ENCODE measurements at regions of chr10 and their contacts with region 1.

Region 1: GRCh38 chr10:110617425-110618229 is 26.5 kb upstream of the RBM20 start:
- DNase-seq: peak; percentile 57
- ATAC-seq: peak; percentile 45
- H3K4me3 Mint-ChIP-seq: no peak overlapping the region
- H3K27ac Mint-ChIP-seq: peak overlapping the region; percentile 74
- H3K4me1 Mint-ChIP-seq: peaks cover 60% of the 10 kb centered on the region
- H3K27me3 Mint-ChIP-seq: no peaks in the 10 kb centered on the region

Region 2: DNA sequence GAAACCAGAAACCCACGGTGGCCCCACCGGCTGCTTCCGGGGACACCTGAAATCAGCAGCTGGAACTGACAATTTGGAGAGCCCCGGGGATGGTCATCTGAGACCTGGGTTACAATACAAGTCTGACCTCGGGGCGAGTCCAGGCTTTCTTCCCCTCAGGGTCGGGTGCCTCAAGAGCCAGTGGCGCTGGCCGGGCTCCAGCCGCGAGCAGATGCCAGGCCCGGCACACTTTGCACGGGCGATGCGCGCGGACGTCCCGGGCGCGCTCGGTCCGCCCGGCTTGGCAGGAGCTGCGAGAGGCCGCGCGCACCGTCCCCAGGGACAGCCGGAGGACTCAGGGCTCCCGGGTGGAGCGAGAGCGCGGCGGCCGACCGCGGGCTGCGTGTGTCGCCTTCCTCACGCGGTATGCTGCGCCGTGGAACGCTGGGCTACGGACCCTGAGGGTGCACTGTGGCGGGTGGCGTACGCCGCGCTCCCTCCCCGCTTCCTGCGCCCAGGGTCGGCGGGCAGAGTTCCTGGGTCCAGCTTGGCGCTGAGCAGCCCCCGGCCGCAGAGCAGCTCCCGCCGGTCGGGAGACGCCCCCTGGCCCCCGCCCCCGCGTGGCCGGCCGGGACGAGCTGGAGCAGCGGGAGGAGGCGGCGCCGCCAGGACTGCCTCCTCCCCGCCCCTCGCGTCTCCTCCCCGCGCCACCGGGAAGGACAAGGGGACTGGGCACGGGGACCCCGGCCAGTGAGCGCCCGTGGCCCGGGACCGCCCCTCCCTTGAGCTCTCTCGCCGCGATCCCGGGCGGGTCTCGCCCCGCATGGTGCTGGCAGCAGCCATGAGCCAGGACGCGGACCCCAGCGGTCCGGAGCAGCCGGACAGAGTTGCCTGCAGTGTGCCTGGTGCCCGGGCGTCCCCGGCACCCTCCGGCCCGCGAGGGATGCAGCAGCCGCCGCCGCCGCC is 26.3 kb after region 1 on chr10 and contains the start of gene RBM20:
- CTCF ChIA-PET with region 1: interaction called, 6 read pairs
- POLR2A ChIA-PET with region 1: no interaction called
- intact Hi-C with region 1: loop called (anchors 2 kb)
- DNase-seq: peak; percentile 40
- ATAC-seq: peak; percentile 36
- H3K4me3 Mint-ChIP-seq: peak within 1 kb of the TSS; percentile 73
- H3K27ac Mint-ChIP-seq: peak within 1 kb of the TSS; percentile 52
- H3K4me1 Mint-ChIP-seq: peaks cover 29% of the 10 kb centered on the region
- H3K27me3 Mint-ChIP-seq: peaks cover 48% of the 10 kb centered on the region
- total RNA-seq, gene RBM20: 0.05 to 0.40 TPM

Region 3: GRCh38 chr10:110724116-110724921 is 106.7 kb after region 1 on chr10:
- CTCF ChIA-PET with region 1: no interaction called
- POLR2A ChIA-PET with region 1: no interaction called
- intact Hi-C with region 1: loop called (anchors 5 kb)
- DNase-seq: peak; percentile 26
- ATAC-seq: peak; percentile 72
- H3K4me3 Mint-ChIP-seq: no peak overlapping the region
- H3K27ac Mint-ChIP-seq: no peak overlapping the region
- H3K4me1 Mint-ChIP-seq: peaks cover 39% of the 10 kb centered on the region
- H3K27me3 Mint-ChIP-seq: no peaks in the 10 kb centered on the region

Measured in activated CD4-positive, alpha-beta T cell treated with anti-CD3 and anti-CD28 coated beads for 36 hours (primary cell).